Activated CD4-positive, alpha-beta T cell treated with anti-CD3 and anti-CD28 coated beads for 36 hours (primary cell): ENCODE measurements at regions of chr11 and their contacts with region 1.

Region 1: DNA sequence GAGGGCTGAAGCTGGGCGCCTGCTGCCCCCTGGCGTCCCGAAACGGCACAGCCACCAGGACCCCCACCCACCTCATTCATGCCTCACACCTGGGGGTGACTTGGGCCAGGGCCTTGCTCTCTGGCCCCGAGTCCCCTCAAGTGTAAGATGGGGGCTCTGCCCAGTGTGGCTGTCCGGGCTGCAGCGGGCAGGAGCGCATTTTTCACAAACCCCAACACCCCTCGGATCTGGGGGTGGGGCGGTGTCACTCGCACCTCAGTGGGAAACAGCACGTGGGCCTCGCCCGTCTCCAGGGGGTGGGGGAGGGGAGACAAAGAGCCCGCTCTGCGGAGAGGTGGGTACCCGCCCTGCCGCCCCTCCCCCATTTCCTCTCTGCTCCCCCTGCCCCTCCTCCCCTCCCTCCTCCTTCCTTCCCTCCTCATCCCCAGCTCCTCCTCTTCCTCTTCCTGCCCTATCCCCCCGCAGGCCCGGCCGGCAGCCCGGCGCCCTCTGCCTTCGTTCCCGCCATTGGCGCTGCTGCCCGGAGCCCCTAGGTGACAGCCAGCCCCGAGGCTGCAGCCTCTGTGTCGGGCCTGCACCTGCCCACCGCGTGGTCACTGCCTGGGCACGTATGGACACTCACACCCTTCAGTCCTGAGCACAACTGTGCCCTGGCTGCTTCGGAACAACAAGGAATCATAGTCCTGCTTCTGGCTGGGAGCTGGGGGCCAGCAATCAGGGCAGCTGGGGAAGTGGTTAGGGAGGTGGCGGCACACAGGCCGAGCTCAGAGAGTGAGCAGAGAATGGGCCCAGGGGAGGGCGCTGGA is 6.8 kb upstream of the CDKN1C start:
- DNase-seq: peak; percentile 85
- ATAC-seq: peak; percentile 69
- H3K4me3 Mint-ChIP-seq: peak overlapping the region; percentile 75
- H3K27ac Mint-ChIP-seq: peak overlapping the region; percentile 80
- H3K4me1 Mint-ChIP-seq: peaks cover 18% of the 10 kb centered on the region
- H3K27me3 Mint-ChIP-seq: no peaks in the 10 kb centered on the region

Region 2: GRCh38 chr11:1896923-1897322 is 995.5 kb before region 1 on chr11:
- CTCF ChIA-PET with region 1: no interaction called
- POLR2A ChIA-PET with region 1: no interaction called
- intact Hi-C with region 1: no loop called
- DNase-seq: no peak
- ATAC-seq: no peak
- H3K4me3 Mint-ChIP-seq: no peak overlapping the region
- H3K27ac Mint-ChIP-seq: no peak overlapping the region
- H3K4me1 Mint-ChIP-seq: peaks cover 7% of the 10 kb centered on the region
- H3K27me3 Mint-ChIP-seq: peaks cover 6% of the 10 kb centered on the region

Region 3: GRCh38 chr11:2428322-2428795 is 464.1 kb before region 1 on chr11:
- CTCF ChIA-PET with region 1: interaction called, 4 read pairs
- POLR2A ChIA-PET with region 1: no interaction called
- intact Hi-C with region 1: loop called (anchors 1 to 2 kb)
- DNase-seq: peak; percentile 93
- ATAC-seq: peak; percentile 96
- H3K4me3 Mint-ChIP-seq: no peak overlapping the region
- H3K27ac Mint-ChIP-seq: no peak overlapping the region
- H3K4me1 Mint-ChIP-seq: no peaks in the 10 kb centered on the region
- H3K27me3 Mint-ChIP-seq: no peaks in the 10 kb centered on the region

Region 4: GRCh38 chr11:2699531-2700414 is 192.6 kb before region 1 on chr11 and contains the start of gene KCNQ1OT1:
- CTCF ChIA-PET with region 1: interaction called, 3 read pairs
- POLR2A ChIA-PET with region 1: interaction called, 3 read pairs
- intact Hi-C with region 1: loop called in 1 of 2 experiments (anchors 2 kb)
- DNase-seq: peak; percentile 91
- ATAC-seq: peak; percentile 98
- H3K4me3 Mint-ChIP-seq: peak within 1 kb of the TSS; percentile 79
- H3K27ac Mint-ChIP-seq: peak within 1 kb of the TSS; percentile 28
- H3K4me1 Mint-ChIP-seq: peaks cover 8% of the 10 kb centered on the region
- H3K27me3 Mint-ChIP-seq: no peaks in the 10 kb centered on the region
- total RNA-seq, gene KCNQ1OT1: 0.16 TPM